ENCODE measurements at regions of chr17 and their contacts with region 1.

Region 1: GRCh38 chr17:1365445-1366039 is 34.5 kb downstream of the YWHAE start:
- DNase-seq: peak; percentile 72
- ATAC-seq: peak; percentile 61
- H3K4me3 Mint-ChIP-seq: no peak overlapping the region
- H3K27ac Mint-ChIP-seq: peak overlapping the region; percentile 46
- H3K4me1 Mint-ChIP-seq: peaks cover 62% of the 10 kb centered on the region
- H3K27me3 Mint-ChIP-seq: no peaks in the 10 kb centered on the region
- CTCF ChIP-seq: peak; percentile 91

Region 2: GRCh38 chr17:1286379-1287106 is 79.0 kb before region 1 on chr17:
- CTCF ChIA-PET with region 1: no interaction called
- POLR2A ChIA-PET with region 1: no interaction called
- intact Hi-C with region 1: no loop called
- DNase-seq: no peak
- ATAC-seq: no peak
- H3K4me3 Mint-ChIP-seq: no peak overlapping the region
- H3K27ac Mint-ChIP-seq: no peak overlapping the region
- H3K4me1 Mint-ChIP-seq: no peaks in the 10 kb centered on the region
- H3K27me3 Mint-ChIP-seq: no peaks in the 10 kb centered on the region
- CTCF ChIP-seq: no peak

Region 3: DNA sequence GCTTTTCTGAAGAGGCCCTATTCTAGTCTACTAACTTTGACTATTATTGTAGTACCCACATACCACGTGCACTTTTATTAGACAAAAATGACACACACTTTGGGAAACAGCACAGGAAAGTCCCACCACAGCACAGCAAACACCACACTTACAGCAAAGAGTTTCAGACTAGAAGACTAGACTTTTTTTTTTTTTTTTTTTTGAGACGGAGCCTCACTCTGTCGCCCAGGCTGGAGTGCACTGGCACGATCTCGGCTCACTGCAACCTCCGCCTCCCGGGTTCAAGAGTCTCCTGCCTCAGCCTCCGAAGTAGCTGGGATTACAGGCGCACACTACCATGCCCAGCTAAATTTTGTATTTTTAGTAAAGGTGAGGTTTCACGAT is 14.4 kb after region 1 on chr17:
- CTCF ChIA-PET with region 1: interaction called, 70 read pairs
- POLR2A ChIA-PET with region 1: interaction called, 13 read pairs
- intact Hi-C with region 1: no loop called
- DNase-seq: peak; percentile 60
- ATAC-seq: peak; percentile 74
- H3K4me3 Mint-ChIP-seq: peak overlapping the region; percentile 1
- H3K27ac Mint-ChIP-seq: peak overlapping the region; percentile 67
- H3K4me1 Mint-ChIP-seq: peaks cover 69% of the 10 kb centered on the region
- H3K27me3 Mint-ChIP-seq: no peaks in the 10 kb centered on the region
- CTCF ChIP-seq: no peak

Region 4: DNA sequence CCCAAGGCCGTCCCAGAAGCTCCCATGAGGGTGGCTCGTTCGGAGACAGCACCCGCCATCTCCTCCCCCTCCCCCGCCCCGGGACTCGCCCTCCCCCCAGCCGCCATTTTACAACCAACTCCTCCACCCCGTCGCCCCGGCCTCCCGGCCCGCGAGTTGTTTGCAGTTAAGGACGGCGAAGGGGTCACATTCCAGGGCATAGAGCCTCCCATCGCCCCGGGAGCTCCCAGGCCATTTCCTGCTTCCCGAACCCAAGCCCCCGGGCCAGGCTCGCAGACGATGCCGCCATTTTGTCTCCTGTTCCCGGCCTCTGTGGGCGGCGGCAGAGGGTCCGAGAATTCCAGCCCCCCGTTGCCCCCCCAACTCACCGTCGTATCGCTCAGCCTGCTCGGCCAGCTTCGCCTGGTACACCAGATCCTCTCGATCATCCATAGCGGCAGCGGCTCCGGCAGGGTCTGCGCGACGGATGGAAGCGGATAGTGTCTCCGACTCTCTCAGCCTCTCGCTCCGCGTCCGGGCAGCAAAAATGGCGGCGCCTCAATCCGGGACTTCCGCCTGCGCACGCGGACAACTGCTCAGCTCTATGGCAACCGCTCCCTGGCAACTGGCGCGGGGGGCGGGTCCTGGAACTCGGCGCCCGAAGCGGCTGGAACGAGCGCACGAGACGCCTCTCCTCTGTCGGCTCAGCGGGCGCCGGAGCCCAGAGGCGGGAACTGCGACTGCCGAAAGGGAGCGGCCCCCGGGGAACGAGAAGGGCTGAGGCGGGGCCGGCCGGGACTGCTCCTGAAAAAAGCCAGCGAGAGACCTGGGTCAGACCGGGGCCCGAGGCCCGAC is 34.4 kb after region 1 on chr17 and contains the start of gene YWHAE:
- CTCF ChIA-PET with region 1: interaction called, 43 read pairs
- POLR2A ChIA-PET with region 1: interaction called, 17 read pairs
- intact Hi-C with region 1: no loop called
- DNase-seq: peak; percentile 98
- ATAC-seq: peak; percentile 93
- H3K4me3 Mint-ChIP-seq: peak within 1 kb of the TSS; percentile 100
- H3K27ac Mint-ChIP-seq: peak within 1 kb of the TSS; percentile 100
- H3K4me1 Mint-ChIP-seq: peaks cover 28% of the 10 kb centered on the region
- H3K27me3 Mint-ChIP-seq: no peaks in the 10 kb centered on the region
- CTCF ChIP-seq: no peak
- total RNA-seq, gene YWHAE: 425 to 440 TPM

Region 5: DNA sequence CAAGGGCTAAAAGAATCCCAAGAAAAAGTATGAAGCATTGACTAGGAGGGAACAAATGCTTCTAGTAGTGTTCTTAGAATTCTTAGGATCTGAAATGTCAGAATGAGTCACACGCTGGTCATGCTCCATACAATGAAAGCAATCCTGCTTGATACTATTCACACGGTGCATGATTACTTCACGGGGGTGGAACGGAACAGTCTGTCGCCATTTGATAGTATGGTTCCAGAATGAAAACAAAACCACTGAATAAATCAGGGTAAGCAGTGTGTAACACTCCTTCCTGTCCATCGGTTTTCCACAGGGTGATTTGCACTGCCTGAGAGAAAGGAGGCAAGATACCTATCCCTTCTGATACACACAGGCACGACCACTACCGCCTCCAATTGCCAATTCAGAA is 57.4 kb after region 1 on chr17:
- CTCF ChIA-PET with region 1: interaction called, 20 read pairs
- POLR2A ChIA-PET with region 1: no interaction called
- intact Hi-C with region 1: no loop called
- DNase-seq: peak; percentile 30
- ATAC-seq: no peak
- H3K4me3 Mint-ChIP-seq: no peak overlapping the region
- H3K27ac Mint-ChIP-seq: peak overlapping the region; percentile 28
- H3K4me1 Mint-ChIP-seq: peaks cover 16% of the 10 kb centered on the region
- H3K27me3 Mint-ChIP-seq: no peaks in the 10 kb centered on the region
- CTCF ChIP-seq: no peak

Region 6: DNA sequence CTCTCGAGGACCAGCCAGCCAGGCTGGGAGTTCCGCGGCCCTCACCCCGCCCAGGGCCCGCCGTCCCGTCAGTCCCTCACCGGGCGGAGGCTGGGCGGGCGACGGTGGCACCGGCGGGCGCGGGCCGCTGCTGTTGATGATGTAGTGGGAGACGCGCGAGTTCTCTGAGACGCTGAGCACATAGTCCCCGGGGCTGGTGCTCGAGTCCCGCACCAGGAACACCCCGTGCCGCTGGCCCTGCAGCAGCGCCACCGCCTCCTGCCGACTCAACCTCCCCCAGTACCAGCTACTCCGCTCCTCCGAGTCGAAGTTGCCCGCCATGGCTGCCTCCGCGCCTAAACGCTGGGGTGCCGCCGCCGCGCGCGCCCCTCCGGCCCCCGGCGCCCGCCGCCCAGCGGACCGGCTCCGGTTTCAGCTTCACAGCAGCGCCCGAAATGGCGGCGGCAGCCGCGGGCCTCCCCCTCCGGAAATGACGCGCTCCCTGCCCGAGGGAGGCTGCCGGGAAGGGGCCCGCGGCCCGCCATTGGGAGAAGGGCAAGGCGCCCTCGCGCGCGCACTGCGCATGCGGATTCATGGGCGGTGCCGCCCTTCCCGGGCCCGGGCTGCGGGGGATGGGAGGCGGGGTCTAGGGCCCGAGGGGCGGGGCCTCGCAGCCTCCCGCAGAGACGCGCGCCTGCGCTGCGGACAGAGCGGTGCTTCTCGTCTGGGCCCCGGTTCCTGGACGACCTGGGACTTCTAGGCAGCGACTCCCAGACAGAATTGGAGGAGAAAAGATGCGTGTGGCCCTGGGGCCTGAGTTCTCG is 90.5 kb after region 1 on chr17 and contains the start of gene CRK:
- CTCF ChIA-PET with region 1: interaction called, 11 read pairs
- POLR2A ChIA-PET with region 1: interaction called, 4 read pairs
- intact Hi-C with region 1: no loop called
- DNase-seq: peak; percentile 96
- ATAC-seq: peak; percentile 97
- H3K4me3 Mint-ChIP-seq: peak within 1 kb of the TSS; percentile 88
- H3K27ac Mint-ChIP-seq: peak within 1 kb of the TSS; percentile 89
- H3K4me1 Mint-ChIP-seq: peaks cover 33% of the 10 kb centered on the region
- H3K27me3 Mint-ChIP-seq: peaks cover 12% of the 10 kb centered on the region
- CTCF ChIP-seq: no peak
- total RNA-seq, gene CRK: 12.1 to 12.9 TPM

Region 7: DNA sequence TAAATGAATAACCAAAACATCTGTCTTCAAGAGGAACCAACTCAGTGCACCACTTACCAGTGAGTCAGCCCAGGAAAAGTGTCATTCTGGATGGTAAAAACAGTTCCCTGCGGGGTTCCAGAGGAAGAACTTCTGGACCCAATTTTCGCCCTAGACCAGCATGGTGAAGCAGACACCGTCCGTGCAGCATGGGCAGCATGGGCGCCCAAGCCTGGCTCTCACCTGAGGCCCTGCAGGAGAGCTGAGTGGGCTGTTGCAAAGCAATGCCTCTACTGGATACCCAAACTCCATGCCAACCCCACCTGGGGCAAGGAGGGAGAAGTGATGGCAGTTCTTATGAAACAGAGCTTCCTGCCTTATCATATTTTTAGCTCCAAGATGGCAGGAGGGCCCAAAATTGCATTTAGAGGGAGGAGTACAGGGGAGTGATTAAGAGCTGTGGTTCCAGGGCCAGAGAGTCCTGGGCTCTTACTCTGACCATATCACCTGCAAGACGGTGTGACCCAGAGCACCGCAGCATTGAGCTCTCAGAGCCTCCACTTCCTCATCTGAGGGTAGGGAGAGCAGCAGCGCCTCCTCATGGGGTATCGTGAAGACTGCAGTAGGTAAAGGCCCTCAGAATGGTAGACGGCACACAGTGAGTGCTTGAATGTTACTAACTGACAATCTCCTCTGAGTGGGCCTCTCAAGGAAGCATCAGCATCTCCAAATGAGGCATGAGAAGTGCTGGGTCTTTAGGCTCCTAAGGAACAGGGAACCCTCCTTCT is 167.5 kb after region 1 on chr17:
- CTCF ChIA-PET with region 1: interaction called, 29 read pairs
- POLR2A ChIA-PET with region 1: no interaction called
- intact Hi-C with region 1: no loop called
- DNase-seq: peak; percentile 64
- ATAC-seq: peak; percentile 83
- H3K4me3 Mint-ChIP-seq: no peak overlapping the region
- H3K27ac Mint-ChIP-seq: no peak overlapping the region
- H3K4me1 Mint-ChIP-seq: peaks cover 1% of the 10 kb centered on the region
- H3K27me3 Mint-ChIP-seq: no peaks in the 10 kb centered on the region
- CTCF ChIP-seq: peak; percentile 33

Region 8: GRCh38 chr17:1882836-1883235 is 517.3 kb after region 1 on chr17:
- CTCF ChIA-PET with region 1: no interaction called
- POLR2A ChIA-PET with region 1: no interaction called
- intact Hi-C with region 1: no loop called
- DNase-seq: peak; percentile 52
- ATAC-seq: peak; percentile 53
- H3K4me3 Mint-ChIP-seq: no peak overlapping the region
- H3K27ac Mint-ChIP-seq: no peak overlapping the region
- H3K4me1 Mint-ChIP-seq: no peaks in the 10 kb centered on the region
- H3K27me3 Mint-ChIP-seq: no peaks in the 10 kb centered on the region
- CTCF ChIP-seq: peak; percentile 53